Spleen (tissue), 13 donors: ENCODE measurements at regions of chr15 and their contacts with region 1.

Region 1: DNA sequence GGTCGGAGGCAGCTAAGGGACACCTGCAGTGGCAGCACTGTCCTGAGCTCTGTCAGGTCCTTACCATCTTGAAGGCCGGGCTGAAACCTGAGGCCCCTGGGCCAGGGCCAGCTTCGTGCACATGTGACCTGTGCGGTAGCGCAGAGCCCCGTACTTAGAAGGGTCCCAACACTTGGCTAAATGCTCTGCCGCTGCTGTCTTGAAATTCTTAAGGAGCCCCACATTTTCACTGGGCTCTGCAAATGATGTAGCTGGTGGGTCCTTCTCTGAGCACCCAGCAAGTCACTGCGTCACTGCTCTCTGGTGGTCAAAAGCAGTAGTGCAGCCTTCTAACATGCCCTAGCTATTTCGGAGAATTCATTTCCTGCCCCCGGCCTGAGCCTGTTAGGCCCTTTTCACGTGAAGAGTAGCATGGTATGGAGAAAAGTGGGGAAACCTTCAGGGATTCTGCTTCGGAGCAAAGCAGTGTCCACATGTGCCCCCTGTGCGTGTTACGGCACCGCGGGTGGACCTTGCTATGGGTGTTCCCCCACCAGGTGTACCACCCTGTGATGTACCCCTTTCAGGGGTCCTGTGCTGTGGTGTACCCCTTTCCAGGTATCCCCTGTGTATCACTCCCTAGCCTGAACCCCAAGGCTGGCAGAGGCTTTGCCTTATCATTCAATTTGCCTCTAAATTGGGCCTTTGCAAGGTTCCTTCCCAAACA is 79.7 kb downstream of the TMEM266 start:
- DNase-seq: no peak
- H3K4me3 ChIP-seq: peak overlapping the region in 2 of 8 donors; percentile 16 to 23
- H3K27ac ChIP-seq: peak overlapping the region in 6 of 8 donors; percentile 34 to 69 (median 50)
- H3K4me1 ChIP-seq: peaks cover 10 to 20% (median 14%) of the 10 kb centered on the region in 6 donors
- H3K27me3 ChIP-seq: peaks cover 0 to 24% (median 0%) of the 10 kb centered on the region in 7 donors
- CTCF ChIP-seq: peak; percentile 82 to 96 (median 92)
- POLR2A ChIP-seq: no peak

Region 2: DNA sequence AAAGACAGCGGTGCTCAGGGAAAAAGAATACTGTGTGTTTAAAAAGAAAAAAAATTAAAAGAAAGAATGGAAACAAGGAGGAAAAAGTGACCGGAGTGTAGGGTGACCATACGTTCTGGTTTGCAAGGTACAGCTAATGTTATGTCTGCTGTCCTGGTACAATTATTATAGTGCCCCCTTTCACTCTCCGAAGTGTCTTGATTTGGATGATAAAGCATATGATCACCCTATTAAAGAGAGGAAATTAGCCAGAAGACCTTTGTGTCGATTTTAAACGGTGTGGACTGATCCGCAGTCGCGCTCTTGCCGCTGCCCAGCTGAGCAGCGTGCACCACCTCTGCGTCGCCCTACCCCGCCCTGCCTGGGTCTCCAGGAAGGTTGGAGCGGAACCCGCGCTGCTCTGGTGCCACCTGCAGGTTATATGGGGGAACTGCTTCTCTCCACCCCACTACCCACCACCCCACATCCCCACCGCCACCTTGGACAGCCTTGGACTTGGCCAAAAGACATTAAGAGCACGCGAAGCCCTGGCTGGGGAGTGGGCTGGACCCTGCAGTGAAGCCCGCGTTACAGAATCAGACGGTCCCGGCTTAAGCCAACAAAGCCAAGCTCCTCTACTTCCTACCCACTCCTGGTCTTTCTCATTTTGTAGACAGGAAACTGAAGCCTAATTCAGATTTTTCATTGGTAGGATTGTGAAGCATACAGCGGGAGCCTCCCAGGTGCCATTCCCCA is 337.5 kb before region 1 on chr15:
- intact Hi-C with region 1: loop called (anchors 10 kb)
- DNase-seq: peak; percentile 95
- H3K4me3 ChIP-seq: peak overlapping the region in 3 of 8 donors; percentile 14 to 48 (median 18)
- H3K27ac ChIP-seq: no peak overlapping the region
- H3K4me1 ChIP-seq: peaks cover 4 to 13% (median 7%) of the 10 kb centered on the region in 6 donors
- H3K27me3 ChIP-seq: peaks cover 0 to 50% (median 5%) of the 10 kb centered on the region in 7 donors
- CTCF ChIP-seq: peak; percentile 71 to 96 (median 91)
- POLR2A ChIP-seq: no peak

Region 3: DNA sequence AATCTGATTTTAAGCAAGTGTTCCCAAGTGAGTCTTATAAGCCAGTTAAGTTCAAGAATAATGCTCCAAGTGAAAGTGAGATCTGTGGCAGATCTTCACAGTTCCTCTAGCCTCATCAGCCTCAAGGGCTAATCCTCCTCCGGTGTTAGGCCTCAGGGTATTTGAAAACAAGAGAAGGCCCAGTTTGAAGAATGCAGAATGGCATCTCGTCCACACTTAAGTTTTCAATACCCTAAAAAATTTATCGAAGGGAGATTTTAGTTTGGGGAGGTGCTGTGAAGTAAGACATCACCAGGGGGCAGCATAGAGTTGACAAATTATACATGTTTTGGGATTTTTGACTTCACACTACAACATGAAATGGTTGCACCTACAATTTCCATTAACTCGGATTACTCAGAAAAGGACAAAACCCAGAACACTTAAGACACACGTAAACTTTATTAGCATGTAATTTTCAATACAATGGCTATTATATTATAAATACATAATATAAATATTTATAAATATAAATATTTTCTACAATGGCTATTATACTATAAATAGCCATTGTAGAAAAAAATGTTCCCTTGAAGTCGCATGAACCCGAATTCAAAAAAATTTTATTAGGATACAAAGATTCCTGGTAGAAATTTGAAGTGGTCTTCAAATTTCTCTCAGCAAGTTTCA is 82.1 kb before region 1 on chr15:
- intact Hi-C with region 1: loop called (anchors 5 kb)
- DNase-seq: no peak
- H3K4me3 ChIP-seq: peak overlapping the region in 1 of 8 donors; percentile 42
- H3K27ac ChIP-seq: peak overlapping the region in 2 of 8 donors; percentile 48 to 54
- H3K4me1 ChIP-seq: peaks cover 13 to 48% (median 34%) of the 10 kb centered on the region in 6 donors
- H3K27me3 ChIP-seq: peaks cover 0 to 43% (median 4%) of the 10 kb centered on the region in 7 donors
- CTCF ChIP-seq: peak; percentile 38 to 77 (median 65)
- POLR2A ChIP-seq: no peak

Region 4: GRCh38 chr15:76245072-76245610 is 105.6 kb after region 1 on chr15:
- intact Hi-C with region 1: no loop called
- DNase-seq: no peak
- H3K4me3 ChIP-seq: no peak overlapping the region
- H3K27ac ChIP-seq: no peak overlapping the region
- H3K4me1 ChIP-seq: no peaks in the 10 kb centered on the region
- H3K27me3 ChIP-seq: no peaks in the 10 kb centered on the region
- CTCF ChIP-seq: no peak
- POLR2A ChIP-seq: no peak

Region 5: GRCh38 chr15:76258471-76258870 is 119.0 kb after region 1 on chr15:
- intact Hi-C with region 1: no loop called
- DNase-seq: no peak
- H3K4me3 ChIP-seq: no peak overlapping the region
- H3K27ac ChIP-seq: no peak overlapping the region
- H3K4me1 ChIP-seq: no peaks in the 10 kb centered on the region
- H3K27me3 ChIP-seq: no peaks in the 10 kb centered on the region
- CTCF ChIP-seq: no peak
- POLR2A ChIP-seq: no peak

Region 6: DNA sequence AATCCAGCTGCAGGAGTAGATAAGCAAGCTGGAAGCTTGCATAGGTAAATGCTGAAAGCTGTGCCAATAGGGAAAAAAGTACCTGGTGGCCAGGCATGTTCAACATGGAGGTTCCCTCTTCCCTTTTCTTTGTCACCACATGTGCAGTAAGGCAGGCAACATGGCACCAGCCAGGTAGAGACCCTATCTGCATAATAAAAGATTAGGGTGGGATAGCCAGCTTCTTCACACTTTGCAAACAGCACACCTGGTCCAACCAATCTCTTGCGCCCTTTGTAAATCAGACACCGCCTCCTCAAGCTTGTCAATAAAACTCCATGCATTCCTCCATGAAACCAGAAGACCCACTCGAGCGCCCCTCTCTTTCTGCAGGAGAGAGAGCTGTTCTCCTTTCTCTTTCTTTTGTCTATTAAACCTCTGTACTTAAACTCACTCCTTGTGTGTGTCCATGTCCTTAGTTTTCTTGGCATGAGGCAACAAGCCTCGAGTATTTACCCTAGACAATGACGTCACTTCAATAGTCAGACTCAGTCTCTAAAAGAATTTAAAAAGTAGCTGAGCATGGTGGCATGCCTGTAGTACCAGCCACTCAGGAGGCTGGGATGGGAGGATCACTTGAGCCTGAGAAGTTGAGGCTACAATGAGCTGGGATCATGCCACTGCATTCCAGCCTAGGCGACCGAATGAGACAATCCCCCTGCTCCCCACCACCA is 509.4 kb after region 1 on chr15:
- intact Hi-C with region 1: no loop called
- DNase-seq: no peak
- H3K4me3 ChIP-seq: no peak overlapping the region
- H3K27ac ChIP-seq: no peak overlapping the region
- H3K4me1 ChIP-seq: no peaks in the 10 kb centered on the region
- H3K27me3 ChIP-seq: no peaks in the 10 kb centered on the region
- CTCF ChIP-seq: no peak
- POLR2A ChIP-seq: no peak

Region 7: GRCh38 chr15:76711351-76711827 is 571.9 kb after region 1 on chr15:
- intact Hi-C with region 1: no loop called
- DNase-seq: no peak
- H3K4me3 ChIP-seq: no peak overlapping the region
- H3K27ac ChIP-seq: no peak overlapping the region
- H3K4me1 ChIP-seq: no peaks in the 10 kb centered on the region
- H3K27me3 ChIP-seq: no peaks in the 10 kb centered on the region
- CTCF ChIP-seq: no peak
- POLR2A ChIP-seq: no peak